Upper lobe of right lung (tissue), 1 donor: ENCODE measurements at regions of chr6 and their contacts with region 1.

Region 1: DNA sequence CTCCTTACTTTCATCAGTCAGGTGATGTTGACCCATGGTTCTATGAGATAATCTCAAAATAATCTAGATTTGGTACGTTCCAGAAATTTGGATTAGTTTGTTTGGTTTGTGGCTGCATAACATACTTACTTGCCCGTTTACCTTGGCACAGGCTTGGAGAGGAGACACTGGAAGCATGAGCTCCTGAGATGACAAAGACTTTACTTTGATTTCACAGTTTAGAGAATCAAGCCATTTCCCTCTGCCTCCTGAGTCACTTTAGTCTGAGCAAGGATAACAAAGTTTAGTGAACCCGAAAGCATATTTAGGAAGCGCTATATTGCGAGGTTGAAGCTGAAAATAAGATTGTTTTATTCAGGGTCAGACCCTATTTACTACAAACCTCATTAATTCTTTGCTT is 643.4 kb downstream of the QKI start:
- DNase-seq: no peak
- ATAC-seq: no peak
- H3K4me3 ChIP-seq: no peak overlapping the region
- H3K27ac ChIP-seq: no peak overlapping the region
- H3K4me1 ChIP-seq: no peaks in the 10 kb centered on the region
- H3K27me3 ChIP-seq: no peaks in the 10 kb centered on the region
- CTCF ChIP-seq: no peak

Region 2: DNA sequence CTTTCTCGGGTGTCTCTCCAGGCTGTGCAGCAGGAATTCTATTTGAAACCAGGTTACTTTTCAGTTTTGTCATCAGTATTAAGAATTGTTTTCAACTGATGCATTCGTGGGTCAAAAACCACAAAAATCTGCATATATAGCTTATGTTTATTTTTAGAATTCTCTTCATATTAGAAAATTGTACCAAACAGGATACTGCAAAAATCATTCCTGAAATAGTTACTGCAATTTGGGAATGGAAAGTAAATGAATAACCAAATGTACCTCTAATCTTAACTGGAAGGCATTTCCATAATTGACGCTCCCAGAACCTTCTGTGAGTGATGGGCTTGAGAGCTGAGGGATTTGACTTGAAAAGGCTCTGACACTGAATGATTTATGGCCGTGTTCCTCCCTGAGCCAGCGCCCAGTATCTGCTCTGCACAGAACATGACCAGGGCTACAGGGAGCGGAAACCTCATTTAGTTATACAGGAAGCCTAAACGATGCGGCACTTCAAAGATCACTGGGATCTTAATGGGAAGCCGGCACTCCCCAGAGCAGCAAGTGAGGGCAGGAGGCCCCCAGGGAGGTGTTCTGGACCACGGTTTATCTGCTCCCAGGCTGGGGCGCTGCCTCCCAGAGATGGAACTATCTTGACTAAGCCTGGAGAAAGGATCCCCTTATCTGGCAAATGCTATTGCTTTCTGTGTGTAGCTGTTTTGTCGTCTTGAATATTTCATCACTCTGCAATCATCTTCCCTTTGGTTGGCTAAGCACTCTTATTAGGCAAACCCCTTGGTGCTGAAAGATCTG is 197.4 kb before region 1 on chr6:
- intact Hi-C with region 1: no loop called
- DNase-seq: no peak
- ATAC-seq: peak; percentile 77
- H3K4me3 ChIP-seq: no peak overlapping the region
- H3K27ac ChIP-seq: no peak overlapping the region
- H3K4me1 ChIP-seq: no peaks in the 10 kb centered on the region
- H3K27me3 ChIP-seq: no peaks in the 10 kb centered on the region
- CTCF ChIP-seq: no peak

Region 3: DNA sequence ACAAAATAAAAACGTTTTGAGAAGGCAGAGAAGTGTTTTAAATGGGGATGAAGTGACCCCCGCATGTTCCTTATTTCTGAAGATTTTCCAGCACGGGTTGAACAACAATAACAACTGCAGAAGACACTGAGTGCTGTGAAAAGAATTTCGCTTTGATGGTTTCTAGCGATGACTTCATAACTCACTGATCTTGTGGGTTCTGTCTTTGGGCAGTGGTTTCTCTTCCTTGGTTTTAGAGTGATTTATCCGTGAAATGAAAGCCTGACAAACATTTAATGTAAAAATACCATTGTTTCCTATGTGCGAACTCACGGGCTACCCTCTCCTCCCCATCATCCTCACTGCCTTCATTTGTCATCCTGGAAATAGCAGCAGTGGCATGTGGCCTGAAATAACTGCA is 150.5 kb after region 1 on chr6:
- intact Hi-C with region 1: loop called (anchors 5 kb)
- DNase-seq: no peak
- ATAC-seq: no peak
- H3K4me3 ChIP-seq: no peak overlapping the region
- H3K27ac ChIP-seq: no peak overlapping the region
- H3K4me1 ChIP-seq: no peaks in the 10 kb centered on the region
- H3K27me3 ChIP-seq: no peaks in the 10 kb centered on the region
- CTCF ChIP-seq: no peak